ENCODE measurements at regions of chr19 and their contacts with region 1.

Region 1: GRCh38 chr19:13861732-13862531 is 15.0 kb upstream of the NANOS3 start:
- DNase-seq: peak; percentile 95
- ATAC-seq: peak; percentile 91 to 96 (median 94)
- H3K4me3 ChIP-seq: peak overlapping the region in 9 of 10 donors; percentile 25 to 59 (median 51)
- H3K27ac ChIP-seq: peak overlapping the region; percentile 78 to 97 (median 96)
- H3K4me1 ChIP-seq: peaks cover 9 to 38% (median 27%) of the 10 kb centered on the region in 9 donors
- H3K27me3 ChIP-seq: peaks cover 0 to 29% (median 0%) of the 10 kb centered on the region in 7 donors
- CTCF ChIP-seq: peak; percentile 95 to 99 (median 98)

Region 2: DNA sequence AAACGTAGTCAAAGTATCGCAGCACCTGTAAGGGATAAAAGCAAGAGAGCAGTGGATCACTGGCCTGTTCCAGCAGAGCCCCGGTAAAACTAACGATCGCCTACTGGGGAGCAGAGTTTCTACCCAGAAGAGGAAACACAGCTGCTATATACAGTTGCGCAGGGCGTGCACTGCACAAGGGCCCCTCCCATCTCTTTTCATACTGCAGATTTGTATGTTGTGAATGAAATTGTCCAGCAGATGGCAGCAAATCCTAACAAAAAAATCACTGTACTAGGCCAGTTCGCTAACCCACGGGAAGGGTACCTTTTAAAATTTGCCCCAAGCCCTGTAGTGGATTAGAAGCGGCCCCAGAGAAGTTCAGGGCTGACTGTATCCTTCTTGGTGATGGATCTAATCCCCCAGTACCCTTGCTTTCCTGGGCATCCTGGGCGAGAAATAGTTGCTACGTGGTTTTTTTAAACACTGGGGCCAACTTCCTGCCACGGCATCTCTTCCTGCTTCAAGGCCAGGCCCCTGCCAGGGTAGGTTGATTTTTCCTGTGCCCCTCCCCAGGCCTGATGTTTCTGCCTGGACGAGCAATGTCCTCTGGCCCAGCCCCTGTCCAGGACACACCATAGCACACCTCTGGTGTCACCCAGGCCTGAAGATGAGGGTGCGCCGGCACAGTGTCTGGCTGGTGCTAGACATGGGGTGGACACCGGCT is 584.7 kb before region 1 on chr19:
- intact Hi-C with region 1: loop called in 1 of 10 experiments (anchors 10 kb)
- DNase-seq: peak; percentile 29 to 67
- ATAC-seq: peak; percentile 83 to 95 (median 92)
- H3K4me3 ChIP-seq: no peak overlapping the region
- H3K27ac ChIP-seq: peak overlapping the region in 1 of 10 donors; percentile 17
- H3K4me1 ChIP-seq: peaks cover 0 to 9% (median 0%) of the 10 kb centered on the region in 9 donors
- H3K27me3 ChIP-seq: peaks cover 0 to 16% (median 9%) of the 10 kb centered on the region in 7 donors
- CTCF ChIP-seq: peak; percentile 49 to 81 (median 73)

Region 3: GRCh38 chr19:13597640-13598039 is 264.3 kb before region 1 on chr19:
- intact Hi-C with region 1: loop called in 7 of 10 experiments (anchors 5 to 10 kb)
- DNase-seq: peak in 1 of 2 donors; percentile 48
- ATAC-seq: peak; percentile 68 to 92 (median 78)
- H3K4me3 ChIP-seq: no peak overlapping the region
- H3K27ac ChIP-seq: no peak overlapping the region
- H3K4me1 ChIP-seq: no peaks in the 10 kb centered on the region
- H3K27me3 ChIP-seq: peaks cover 0 to 52% (median 22%) of the 10 kb centered on the region in 7 donors
- CTCF ChIP-seq: peak; percentile 27 to 76 (median 65)

Region 4: DNA sequence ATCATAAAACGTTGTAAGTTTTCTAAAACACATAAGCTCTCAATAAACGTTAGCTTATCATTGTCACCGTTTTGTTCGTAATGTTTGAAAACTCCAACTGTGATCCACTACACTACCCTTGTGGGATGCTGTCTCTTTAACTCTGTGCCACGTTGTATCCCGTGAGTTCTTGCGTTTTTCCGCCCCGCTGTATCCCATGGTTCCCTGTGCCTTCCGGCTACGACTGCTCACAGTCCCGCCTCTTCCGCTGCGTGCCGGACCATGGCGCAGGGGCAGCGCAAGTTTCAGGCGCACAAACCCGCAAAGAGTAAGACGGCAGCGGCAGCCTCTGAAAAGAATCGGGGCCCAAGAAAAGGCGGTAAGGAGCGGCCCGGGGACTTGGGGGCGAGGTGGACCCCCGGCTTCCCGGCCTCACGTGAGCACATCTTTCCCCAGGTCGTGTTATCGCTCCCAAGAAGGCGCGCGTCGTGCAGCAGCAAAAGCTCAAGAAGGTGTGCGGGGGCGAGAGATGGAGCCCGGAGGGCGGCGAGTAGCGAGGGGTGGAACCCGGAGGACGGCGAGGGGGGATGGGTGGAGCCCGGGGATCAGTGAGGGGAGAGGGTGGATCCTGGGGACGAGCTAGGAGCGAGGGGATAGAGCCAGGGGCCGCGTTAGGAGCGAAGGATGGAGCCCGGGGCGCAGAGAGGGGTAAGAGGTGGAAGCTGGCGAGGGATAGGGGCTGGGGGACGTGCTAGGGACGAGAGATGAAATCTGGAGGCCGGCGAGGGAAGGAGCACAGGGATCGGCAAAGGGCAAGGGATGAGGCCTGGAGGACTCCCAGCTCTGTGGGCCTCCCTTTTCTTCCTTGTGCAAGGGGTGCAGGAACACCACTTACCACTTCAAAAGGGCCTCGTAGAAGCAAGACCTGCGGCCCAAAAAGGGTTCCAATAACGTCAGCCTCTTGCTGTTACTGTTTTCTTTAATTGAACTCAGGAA is 87.4 kb before region 1 on chr19 and contains the start of gene C19orf53:
- intact Hi-C with region 1: no loop called
- DNase-seq: peak; percentile 88 to 93
- ATAC-seq: peak; percentile 95 to 99 (median 98)
- H3K4me3 ChIP-seq: peak within 1 kb of the TSS; percentile 74 to 98 (median 89)
- H3K27ac ChIP-seq: peak within 1 kb of the TSS; percentile 62 to 94 (median 86)
- H3K4me1 ChIP-seq: peaks cover 0 to 23% (median 19%) of the 10 kb centered on the region in 9 donors
- H3K27me3 ChIP-seq: no peaks in the 10 kb centered on the region
- CTCF ChIP-seq: no peak
- total RNA-seq, gene C19orf53: 80.5 to 101 (median 90.3) TPM

Region 5: GRCh38 chr19:13784731-13785452 is 77.0 kb before region 1 on chr19:
- intact Hi-C with region 1: loop called (anchors 1 to 5 kb)
- DNase-seq: peak; percentile 72 to 82
- ATAC-seq: peak; percentile 49 to 69 (median 64)
- H3K4me3 ChIP-seq: no peak overlapping the region
- H3K27ac ChIP-seq: peak overlapping the region in 2 of 10 donors; percentile 15 to 36
- H3K4me1 ChIP-seq: peaks cover 5 to 61% (median 33%) of the 10 kb centered on the region in 9 donors
- H3K27me3 ChIP-seq: no peaks in the 10 kb centered on the region
- CTCF ChIP-seq: peak; percentile 29 to 79 (median 67)

Region 6: GRCh38 chr19:13794757-13795589 is 67.0 kb before region 1 on chr19 and contains the start of gene ZSWIM4:
- intact Hi-C with region 1: loop called in 1 of 10 experiments (anchors 5 kb)
- DNase-seq: peak; percentile 98 to 99
- ATAC-seq: peak; percentile 95 to 98 (median 97)
- H3K4me3 ChIP-seq: peak within 1 kb of the TSS; percentile 62 to 96 (median 73)
- H3K27ac ChIP-seq: peak within 1 kb of the TSS; percentile 83 to 94 (median 91)
- H3K4me1 ChIP-seq: peaks cover 16 to 36% (median 30%) of the 10 kb centered on the region in 9 donors
- H3K27me3 ChIP-seq: no peaks in the 10 kb centered on the region
- CTCF ChIP-seq: no peak
- total RNA-seq, gene ZSWIM4: 2.1 to 7.1 (median 3.0) TPM

Region 7: GRCh38 chr19:13804830-13805683 is 56.9 kb before region 1 on chr19:
- intact Hi-C with region 1: loop called in 1 of 10 experiments (anchors 2 kb)
- DNase-seq: peak in 1 of 2 donors; percentile 61
- ATAC-seq: peak in 7 of 8 donors; percentile 61 to 82 (median 71)
- H3K4me3 ChIP-seq: no peak overlapping the region
- H3K27ac ChIP-seq: no peak overlapping the region
- H3K4me1 ChIP-seq: peaks cover 0 to 3% (median 0%) of the 10 kb centered on the region in 9 donors
- H3K27me3 ChIP-seq: no peaks in the 10 kb centered on the region
- CTCF ChIP-seq: peak; percentile 27 to 64 (median 52)

Region 8: DNA sequence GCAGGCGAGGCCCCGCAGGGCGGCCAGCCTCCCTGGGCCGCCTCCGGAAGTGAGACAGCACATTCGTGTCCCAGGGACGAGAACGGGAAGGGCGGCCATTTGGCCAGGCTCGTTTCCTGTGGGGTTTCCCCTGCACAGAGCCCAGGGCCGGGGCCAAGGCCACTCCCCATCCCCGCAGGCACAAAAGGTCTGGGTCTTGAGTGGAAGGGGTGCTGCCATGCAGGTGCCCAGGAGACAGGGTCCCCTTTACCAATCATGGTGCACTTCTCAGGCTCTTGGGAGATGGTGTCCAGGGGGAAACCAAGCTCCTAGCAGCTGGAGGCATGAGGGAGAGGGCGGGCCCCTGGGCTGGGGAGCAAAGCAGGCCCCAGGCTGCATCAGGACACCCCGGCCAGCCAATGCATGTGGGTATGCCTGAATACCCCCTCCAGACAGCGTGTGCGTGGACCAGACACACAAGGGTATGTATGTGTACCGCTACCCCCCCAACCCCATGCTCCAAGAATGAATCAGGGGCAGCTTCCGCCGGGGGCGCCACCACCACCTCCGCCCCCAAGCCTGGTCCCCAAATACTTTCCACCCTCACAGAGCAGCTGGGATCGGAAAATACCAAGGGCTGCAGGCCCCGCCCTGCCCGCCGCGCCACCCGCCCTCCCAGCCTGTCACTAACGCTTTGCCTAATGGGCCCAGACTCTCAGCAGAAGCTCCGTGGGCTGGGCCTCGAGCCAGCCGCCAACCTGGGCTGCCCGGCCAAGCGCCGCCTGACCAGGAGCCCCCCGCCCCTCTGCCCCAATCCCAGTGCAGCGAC is 22.6 kb before region 1 on chr19:
- intact Hi-C with region 1: loop called in 1 of 10 experiments (anchors 2 kb)
- DNase-seq: peak; percentile 93 to 94
- ATAC-seq: peak; percentile 57 to 76 (median 70)
- H3K4me3 ChIP-seq: peak overlapping the region; percentile 76 to 100 (median 96)
- H3K27ac ChIP-seq: peak overlapping the region; percentile 99 to 100 (median 100)
- H3K4me1 ChIP-seq: peaks cover 41 to 83% (median 64%) of the 10 kb centered on the region in 9 donors
- H3K27me3 ChIP-seq: no peaks in the 10 kb centered on the region
- CTCF ChIP-seq: peak in 4 of 9 donors; percentile 8 to 29 (median 27)

Region 9: GRCh38 chr19:13905938-13906904 is 44.3 kb after region 1 on chr19 and contains the starts of genes BRME1 and CC2D1A:
- intact Hi-C with region 1: no loop called
- DNase-seq: peak; percentile 93 to 95
- ATAC-seq: peak; percentile 98 to 100 (median 99)
- H3K4me3 ChIP-seq: peak within 1 kb of the TSS; percentile 77 to 97 (median 85)
- H3K27ac ChIP-seq: peak within 1 kb of the TSS in 9 of 10 donors; percentile 33 to 87 (median 69)
- H3K4me1 ChIP-seq: peaks cover 0 to 24% (median 16%) of the 10 kb centered on the region in 9 donors
- H3K27me3 ChIP-seq: no peaks in the 10 kb centered on the region
- CTCF ChIP-seq: peak in 2 of 9 donors; percentile 12 to 23
- total RNA-seq, gene BRME1: 0.19 to 0.88 (median 0.63) TPM in 8 of 10 donors, not detected in the others
- total RNA-seq, gene CC2D1A: 13.2 to 30.2 (median 19.0) TPM